Dendritic cell treated with granulocyte-macrophage colony-stimulating factor and Interleukin-4, amounts not matched to agents 40 ng/mL and 50 ng/mL, for 4 days (primary cell): ENCODE measurements at regions of chrX and their contacts with region 1.

Region 1: DNA sequence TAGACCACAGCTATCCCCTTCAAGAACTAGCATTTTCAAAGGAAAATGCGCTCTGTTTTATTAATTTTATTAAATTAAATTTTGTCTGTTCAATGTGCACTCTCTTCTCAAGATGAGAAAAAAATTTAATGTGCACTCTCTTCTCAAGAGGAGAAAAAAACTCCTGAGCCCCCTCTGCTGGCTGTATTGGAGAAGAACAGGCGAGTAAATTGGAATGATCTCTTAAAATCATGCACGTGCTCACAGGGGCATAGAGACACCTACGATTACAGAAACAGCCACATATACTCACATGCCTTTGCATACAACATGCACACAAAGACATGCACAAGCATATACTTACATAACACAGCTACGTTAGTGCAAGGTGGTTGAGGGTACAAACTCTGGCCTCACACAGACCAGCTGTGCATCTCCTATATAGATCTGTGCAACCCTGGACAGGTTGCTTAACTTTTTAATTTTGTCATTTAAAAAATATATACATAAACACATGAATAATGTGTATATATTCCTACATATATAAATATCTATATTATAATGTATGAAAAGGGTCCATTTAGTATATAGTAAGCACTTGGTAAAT is 176.2 kb upstream of the CXorf66 start:
- H3K4me3 Mint-ChIP-seq: no peak overlapping the region
- H3K27ac Mint-ChIP-seq: no peak overlapping the region
- H3K4me1 Mint-ChIP-seq: no peaks in the 10 kb centered on the region
- H3K27me3 Mint-ChIP-seq: no peaks in the 10 kb centered on the region

Region 2: GRCh38 chrX:140057001-140057411 is 84.5 kb before region 1 on chrX:
- intact Hi-C with region 1: loop called (anchors 1 kb)
- H3K4me3 Mint-ChIP-seq: no peak overlapping the region
- H3K27ac Mint-ChIP-seq: no peak overlapping the region
- H3K4me1 Mint-ChIP-seq: peaks cover 15% of the 10 kb centered on the region
- H3K27me3 Mint-ChIP-seq: peaks cover 5% of the 10 kb centered on the region